Right cardiac atrium (tissue), 5 donors: ENCODE measurements at regions of chr6 and their contacts with region 1.

Region 1: GRCh38 chr6:150891888-150892485 is 26.5 kb downstream of the MTHFD1L start:
- DNase-seq: peak; percentile 56 to 90 (median 72)
- ATAC-seq: peak; percentile 59 to 68
- H3K4me3 ChIP-seq: no peak overlapping the region
- H3K27ac ChIP-seq: no peak overlapping the region
- H3K4me1 ChIP-seq: peaks cover 3% of the 10 kb centered on the region
- H3K27me3 ChIP-seq: no peaks in the 10 kb centered on the region

Region 2: GRCh38 chr6:150600301-150601017 is 291.5 kb before region 1 on chr6:
- intact Hi-C with region 1: no loop called
- DNase-seq: peak; percentile 75 to 83 (median 77)
- ATAC-seq: peak; percentile 69 to 86
- H3K4me3 ChIP-seq: peak overlapping the region; percentile 72
- H3K27ac ChIP-seq: peak overlapping the region; percentile 32
- H3K4me1 ChIP-seq: no peaks in the 10 kb centered on the region
- H3K27me3 ChIP-seq: no peaks in the 10 kb centered on the region

Region 3: GRCh38 chr6:150937132-150937889 is 45.3 kb after region 1 on chr6:
- intact Hi-C with region 1: loop called in 1 of 4 experiments (anchors 2 kb)
- DNase-seq: peak; percentile 82 to 90 (median 83)
- ATAC-seq: peak; percentile 91 to 92
- H3K4me3 ChIP-seq: no peak overlapping the region
- H3K27ac ChIP-seq: no peak overlapping the region
- H3K4me1 ChIP-seq: no peaks in the 10 kb centered on the region
- H3K27me3 ChIP-seq: no peaks in the 10 kb centered on the region

Region 4: DNA sequence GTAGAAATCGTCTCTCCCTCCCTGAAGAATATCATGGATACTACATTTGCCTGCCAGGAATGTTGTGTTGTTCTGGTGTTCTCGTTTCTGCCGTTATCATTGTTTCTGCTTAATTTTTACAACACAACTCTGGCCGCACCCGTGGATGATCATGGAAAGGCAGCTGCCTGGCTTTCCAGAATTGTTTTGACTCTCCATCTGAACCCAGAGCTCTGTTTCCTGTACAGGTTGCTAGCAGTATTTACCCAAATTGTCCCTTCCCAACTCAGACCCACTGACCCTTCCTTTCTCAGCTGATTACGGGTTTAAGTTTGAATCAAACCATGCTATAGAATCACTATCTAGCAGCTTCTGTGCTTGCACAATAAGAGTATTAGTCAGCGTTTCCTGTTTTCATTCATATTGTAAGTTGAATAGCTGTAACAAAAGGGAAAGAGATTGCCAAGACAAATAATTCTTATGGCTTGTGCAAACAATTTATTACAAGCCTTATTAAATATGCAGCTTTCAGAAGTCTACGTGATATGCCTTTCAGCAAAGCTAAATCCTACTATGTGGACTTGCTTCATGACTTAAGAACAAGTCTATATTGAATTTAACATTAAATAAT is 112.5 kb after region 1 on chr6:
- intact Hi-C with region 1: loop called in 2 of 4 experiments (anchors 5 to 10 kb)
- DNase-seq: peak in 2 of 3 donors; percentile 42 to 69
- ATAC-seq: peak; percentile 73 to 92
- H3K4me3 ChIP-seq: no peak overlapping the region
- H3K27ac ChIP-seq: peak overlapping the region; percentile 89
- H3K4me1 ChIP-seq: peaks cover 2% of the 10 kb centered on the region
- H3K27me3 ChIP-seq: no peaks in the 10 kb centered on the region

Region 5: GRCh38 chr6:151014404-151015100 is 122.6 kb after region 1 on chr6:
- intact Hi-C with region 1: loop called (anchors 5 to 10 kb)
- DNase-seq: peak; percentile 47 to 83 (median 79)
- ATAC-seq: peak; percentile 78 to 79
- H3K4me3 ChIP-seq: no peak overlapping the region
- H3K27ac ChIP-seq: no peak overlapping the region
- H3K4me1 ChIP-seq: no peaks in the 10 kb centered on the region
- H3K27me3 ChIP-seq: no peaks in the 10 kb centered on the region

Region 6: GRCh38 chr6:151025076-151025475 is 133.1 kb after region 1 on chr6:
- intact Hi-C with region 1: no loop called
- DNase-seq: no peak
- ATAC-seq: peak in 1 of 2 donors; percentile 30
- H3K4me3 ChIP-seq: no peak overlapping the region
- H3K27ac ChIP-seq: no peak overlapping the region
- H3K4me1 ChIP-seq: no peaks in the 10 kb centered on the region
- H3K27me3 ChIP-seq: no peaks in the 10 kb centered on the region

Region 7: GRCh38 chr6:151323791-151324487 is 432.0 kb after region 1 on chr6:
- intact Hi-C with region 1: loop called in 1 of 4 experiments (anchors 5 kb)
- DNase-seq: peak; percentile 84 to 93 (median 93)
- ATAC-seq: peak; percentile 90 to 94
- H3K4me3 ChIP-seq: no peak overlapping the region
- H3K27ac ChIP-seq: peak overlapping the region; percentile 54
- H3K4me1 ChIP-seq: peaks cover 5% of the 10 kb centered on the region
- H3K27me3 ChIP-seq: no peaks in the 10 kb centered on the region

Region 8: GRCh38 chr6:151330134-151330696 is 438.2 kb after region 1 on chr6:
- intact Hi-C with region 1: loop called (anchors 2 to 5 kb)
- DNase-seq: no peak
- ATAC-seq: no peak
- H3K4me3 ChIP-seq: no peak overlapping the region
- H3K27ac ChIP-seq: no peak overlapping the region
- H3K4me1 ChIP-seq: peaks cover 4% of the 10 kb centered on the region
- H3K27me3 ChIP-seq: no peaks in the 10 kb centered on the region

Region 9: GRCh38 chr6:151339369-151339768 is 447.4 kb after region 1 on chr6:
- intact Hi-C with region 1: loop called in 3 of 4 experiments (anchors 2 to 5 kb)
- DNase-seq: no peak
- ATAC-seq: no peak
- H3K4me3 ChIP-seq: no peak overlapping the region
- H3K27ac ChIP-seq: no peak overlapping the region
- H3K4me1 ChIP-seq: no peaks in the 10 kb centered on the region
- H3K27me3 ChIP-seq: no peaks in the 10 kb centered on the region